ENCODE measurements at regions of chr6 and their contacts with region 1.

Region 1: DNA sequence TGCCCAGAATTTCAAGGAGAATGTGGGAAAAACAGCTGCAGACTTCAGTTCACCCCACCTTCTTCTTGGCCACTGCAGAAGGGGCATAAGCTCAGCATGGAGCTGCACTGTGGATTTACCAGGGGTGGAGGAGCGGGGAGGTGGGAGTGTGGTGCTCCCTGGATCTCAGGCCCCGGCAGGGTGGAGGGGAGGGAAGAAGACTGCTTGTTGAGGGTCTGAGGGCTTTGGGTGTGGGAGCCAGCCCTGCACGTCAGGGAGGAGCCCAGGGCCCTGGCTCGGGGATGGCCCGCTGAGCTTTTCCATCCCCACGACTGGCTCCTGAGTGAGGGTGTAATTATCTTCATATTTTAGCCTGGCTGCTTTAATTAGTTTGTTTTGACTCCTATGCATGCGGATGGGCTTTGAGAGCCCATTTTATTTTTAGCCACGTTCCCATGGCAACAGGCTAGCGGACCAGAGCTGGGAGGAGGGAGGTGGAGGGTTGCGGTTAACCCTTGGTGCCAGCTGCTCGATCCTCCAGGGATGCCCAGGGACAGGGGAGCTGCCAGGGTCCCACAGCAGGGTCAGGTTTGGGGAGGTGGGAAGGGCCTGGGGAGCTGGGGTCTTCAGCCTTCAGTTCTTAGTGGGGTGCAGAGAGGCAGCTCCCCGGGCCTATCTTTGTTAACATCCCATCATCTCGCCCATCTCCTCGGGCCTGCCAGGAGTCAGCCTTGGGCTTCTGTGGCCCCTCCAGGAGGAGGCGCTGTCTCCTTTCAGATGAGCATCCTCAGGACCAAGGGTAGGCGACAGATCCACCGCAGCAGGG is 68.2 kb downstream of the RAB44 start:
- DNase-seq: peak; percentile 76
- ATAC-seq: peak; percentile 95
- H3K4me3 ChIP-seq: no peak overlapping the region
- H3K27ac ChIP-seq: no peak overlapping the region
- H3K4me1 ChIP-seq: peaks cover 11% of the 10 kb centered on the region
- H3K27me3 ChIP-seq: peaks cover 13% of the 10 kb centered on the region
- CTCF ChIP-seq: peak; percentile 98
- POLR2A ChIP-seq: 0 out of 2 replicates have a peak, but pooled peaks have one; percentile 32
- RAD21 ChIP-seq: peak; percentile 98

Region 2: DNA sequence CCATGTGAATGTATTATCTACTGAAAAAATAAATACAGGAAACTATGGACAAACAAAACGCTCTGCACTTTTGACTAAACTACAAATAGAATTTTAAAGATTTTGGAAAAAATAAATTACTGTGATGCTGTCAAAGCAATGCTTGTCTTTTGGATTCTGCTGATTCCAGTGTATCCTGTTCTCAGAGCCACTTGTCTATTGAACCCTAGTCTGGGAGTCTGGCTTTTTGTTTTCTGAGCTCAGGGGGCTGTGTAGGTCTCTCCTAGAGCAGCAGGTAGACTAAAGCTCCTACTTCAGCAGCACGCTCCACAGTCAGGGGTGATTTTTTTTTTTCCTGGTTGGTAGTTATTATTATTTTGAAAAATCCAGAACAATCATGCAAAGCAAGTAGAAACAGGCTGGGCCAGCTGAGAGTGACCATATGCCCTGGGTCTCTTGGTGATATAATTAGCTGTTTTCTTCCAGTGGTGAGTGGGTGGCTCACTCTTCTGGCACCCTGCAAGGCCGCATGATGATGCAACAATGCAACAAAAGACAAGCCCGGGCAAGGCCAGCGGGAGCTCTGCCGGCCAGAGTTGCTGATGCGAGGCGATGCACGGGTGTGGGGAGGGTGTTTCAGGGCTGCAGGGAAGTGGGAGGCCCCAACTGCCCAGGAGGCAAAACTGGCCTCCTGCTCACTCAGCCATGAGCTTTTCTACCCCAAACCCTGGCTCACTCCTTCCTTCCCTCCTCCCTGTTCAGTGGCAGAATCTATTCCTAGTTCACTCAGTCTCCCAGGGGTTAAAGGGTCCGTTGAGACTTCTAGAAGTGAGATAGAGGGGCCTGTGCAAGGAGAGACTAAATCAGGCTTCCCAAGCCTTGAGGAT is 98.8 kb before region 1 on chr6:
- CTCF ChIA-PET with region 1: no interaction called
- POLR2A ChIA-PET with region 1: no interaction called
- dilution Hi-C with region 1: no loop called
- in situ Hi-C with region 1: no loop called
- intact Hi-C with region 1: no loop called
- DNase-seq: peak; percentile 96
- ATAC-seq: peak; percentile 96
- H3K4me3 ChIP-seq: no peak overlapping the region
- H3K27ac ChIP-seq: peak overlapping the region; percentile 95
- H3K4me1 ChIP-seq: peaks cover 13% of the 10 kb centered on the region
- H3K27me3 ChIP-seq: no peaks in the 10 kb centered on the region
- CTCF ChIP-seq: no peak
- POLR2A ChIP-seq: no peak; the same call in 1 of the 2 replicates
- RAD21 ChIP-seq: peak; percentile 27

Region 3: DNA sequence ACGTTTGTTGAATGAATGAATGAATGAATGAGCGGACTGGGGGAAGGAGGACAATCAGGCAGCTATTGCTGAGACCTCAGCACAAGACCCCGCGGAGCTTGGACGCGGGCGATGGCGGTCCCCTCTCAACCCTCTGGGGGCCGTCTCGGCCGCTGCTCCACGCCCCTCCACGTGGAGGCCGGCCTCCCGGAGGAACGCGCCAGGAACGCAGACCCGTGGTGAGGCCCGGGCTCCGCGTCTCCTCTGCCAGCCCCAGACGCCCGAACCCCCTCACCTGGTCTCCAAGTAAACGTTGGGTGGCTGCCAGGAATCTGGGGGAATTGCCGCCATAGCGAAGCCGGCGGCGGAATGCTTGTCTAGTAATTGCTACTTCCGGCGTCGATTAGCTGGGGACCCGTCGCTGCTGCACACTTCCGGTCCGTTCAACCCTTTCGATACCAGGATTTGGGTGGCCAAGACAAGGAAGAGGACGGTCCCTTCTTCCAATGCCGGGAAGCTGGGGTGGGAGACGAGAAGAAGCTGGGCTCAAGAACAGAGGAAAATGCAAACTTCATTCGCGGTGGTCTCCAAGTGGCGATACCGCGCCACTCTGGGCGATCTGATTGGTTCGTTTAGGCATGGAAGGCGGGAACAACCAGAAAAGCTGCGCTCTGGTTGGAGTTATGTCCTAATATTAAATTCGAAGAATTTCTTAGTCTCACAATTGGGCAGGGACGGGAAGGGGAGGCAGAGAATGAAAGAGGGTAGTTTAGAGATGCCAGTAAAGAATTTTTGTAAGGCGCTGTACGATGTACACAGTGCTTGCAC is 108.8 kb after region 1 on chr6 and contains the start of gene PPIL1:
- CTCF ChIA-PET with region 1: interaction called, 5 read pairs
- POLR2A ChIA-PET with region 1: no interaction called
- dilution Hi-C with region 1: no loop called
- in situ Hi-C with region 1: no loop called
- intact Hi-C with region 1: loop called (anchors 2 kb)
- DNase-seq: peak; percentile 90
- ATAC-seq: peak; percentile 97
- H3K4me3 ChIP-seq: peak within 1 kb of the TSS; percentile 60
- H3K27ac ChIP-seq: peak within 1 kb of the TSS; percentile 89
- H3K4me1 ChIP-seq: peaks cover 4% of the 10 kb centered on the region
- H3K27me3 ChIP-seq: no peaks in the 10 kb centered on the region
- CTCF ChIP-seq: no peak
- POLR2A ChIP-seq: peak; percentile 53; the same call in 1 of the 2 replicates
- RAD21 ChIP-seq: no peak
- total RNA-seq, gene PPIL1: 50.5 and 58.4 TPM in 2 replicates

Region 4: DNA sequence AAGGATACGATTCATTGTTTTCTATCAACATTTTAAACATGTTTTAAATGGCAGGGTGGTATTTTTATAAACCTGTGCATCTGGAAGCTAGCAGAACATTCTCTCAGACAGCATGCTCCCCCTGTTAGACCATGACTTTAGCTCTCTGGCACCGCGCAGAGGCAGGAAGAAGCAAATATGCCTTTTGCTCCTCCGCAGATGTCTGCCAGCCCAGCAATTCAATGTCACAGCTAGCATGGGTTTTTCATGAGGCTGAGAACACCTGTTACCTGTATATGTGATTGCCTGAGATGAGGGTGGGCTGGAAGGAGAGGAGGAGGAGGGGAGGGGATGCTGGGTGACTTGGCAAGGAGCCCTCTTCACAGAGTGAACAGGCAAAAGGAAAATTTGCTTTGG is 213.5 kb after region 1 on chr6:
- CTCF ChIA-PET with region 1: no interaction called
- POLR2A ChIA-PET with region 1: no interaction called
- dilution Hi-C with region 1: no loop called
- in situ Hi-C with region 1: no loop called
- intact Hi-C with region 1: loop called (anchors 1 kb)
- DNase-seq: peak; percentile 41
- ATAC-seq: peak; percentile 56; the same call in 1 of the 2 replicates
- H3K4me3 ChIP-seq: no peak overlapping the region
- H3K27ac ChIP-seq: no peak overlapping the region
- H3K4me1 ChIP-seq: peaks cover 13% of the 10 kb centered on the region
- H3K27me3 ChIP-seq: no peaks in the 10 kb centered on the region
- CTCF ChIP-seq: peak; percentile 40
- POLR2A ChIP-seq: no peak
- RAD21 ChIP-seq: peak; percentile 53

Region 5: DNA sequence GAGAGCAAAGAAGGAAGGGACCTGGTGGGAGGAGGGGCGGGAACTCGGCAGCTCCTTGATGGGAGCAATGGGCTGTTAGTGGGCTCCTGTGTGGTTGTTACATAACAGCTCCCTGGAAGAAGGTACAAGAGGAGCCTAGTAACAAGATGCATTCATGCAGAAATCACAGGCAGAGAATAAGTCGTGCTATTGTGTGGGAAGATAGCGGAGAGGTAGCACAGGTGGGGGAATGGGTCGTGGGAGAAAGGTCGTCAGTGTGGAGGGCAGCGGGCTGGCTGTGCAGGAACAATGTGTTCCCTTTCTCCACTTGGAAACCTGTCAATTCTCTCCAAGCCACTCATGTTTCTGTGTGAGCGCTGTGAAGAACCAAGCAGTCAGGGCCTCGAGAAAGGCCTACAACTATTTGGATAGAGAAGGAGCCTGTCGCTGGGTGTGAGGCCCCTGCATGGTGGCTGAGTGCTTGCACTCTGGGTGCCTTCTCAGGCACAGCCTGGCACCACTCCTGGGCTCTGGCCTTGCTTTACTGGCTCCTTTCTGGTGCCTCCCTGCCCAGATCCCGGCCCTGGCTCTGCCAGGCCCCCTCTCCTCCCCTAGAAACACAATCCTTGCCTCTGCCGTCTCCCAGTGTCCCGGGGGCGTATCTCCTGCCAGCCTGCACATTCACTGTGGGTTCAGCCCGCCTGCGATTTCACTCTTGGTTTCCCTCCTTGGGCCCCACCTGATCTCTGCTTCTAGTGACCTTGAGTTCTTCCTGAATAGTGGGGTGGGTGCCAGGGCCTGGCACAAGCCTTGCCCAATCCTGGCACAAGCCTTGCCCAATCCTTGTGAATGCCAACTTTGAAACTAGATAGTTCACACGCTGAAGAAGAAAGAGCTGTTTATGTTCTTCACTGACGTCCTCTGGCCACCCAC is 232.3 kb after region 1 on chr6:
- CTCF ChIA-PET with region 1: no interaction called
- POLR2A ChIA-PET with region 1: no interaction called
- dilution Hi-C with region 1: no loop called
- in situ Hi-C with region 1: no loop called
- intact Hi-C with region 1: no loop called
- DNase-seq: no peak
- ATAC-seq: no peak
- H3K4me3 ChIP-seq: no peak overlapping the region
- H3K27ac ChIP-seq: no peak overlapping the region
- H3K4me1 ChIP-seq: no peaks in the 10 kb centered on the region
- H3K27me3 ChIP-seq: peaks cover 44% of the 10 kb centered on the region
- CTCF ChIP-seq: no peak
- POLR2A ChIP-seq: no peak
- RAD21 ChIP-seq: no peak

Region 6: GRCh38 chr6:37018198-37019064 is 252.6 kb after region 1 on chr6:
- CTCF ChIA-PET with region 1: interaction called, 28 read pairs
- POLR2A ChIA-PET with region 1: no interaction called
- dilution Hi-C with region 1: no loop called
- in situ Hi-C with region 1: loop called (anchors 5 kb)
- intact Hi-C with region 1: loop called (anchors 1 kb)
- DNase-seq: peak; percentile 87
- ATAC-seq: peak; percentile 99
- H3K4me3 ChIP-seq: no peak overlapping the region
- H3K27ac ChIP-seq: no peak overlapping the region
- H3K4me1 ChIP-seq: no peaks in the 10 kb centered on the region; the same call in 1 of the 2 replicates
- H3K27me3 ChIP-seq: no peaks in the 10 kb centered on the region
- CTCF ChIP-seq: peak; percentile 97
- POLR2A ChIP-seq: no peak
- RAD21 ChIP-seq: peak; percentile 96

Measured in IMR-90 (cell line).